Heart left ventricle (tissue), 16 donors: ENCODE measurements at regions of chr6 and their contacts with region 1.

Region 1: DNA sequence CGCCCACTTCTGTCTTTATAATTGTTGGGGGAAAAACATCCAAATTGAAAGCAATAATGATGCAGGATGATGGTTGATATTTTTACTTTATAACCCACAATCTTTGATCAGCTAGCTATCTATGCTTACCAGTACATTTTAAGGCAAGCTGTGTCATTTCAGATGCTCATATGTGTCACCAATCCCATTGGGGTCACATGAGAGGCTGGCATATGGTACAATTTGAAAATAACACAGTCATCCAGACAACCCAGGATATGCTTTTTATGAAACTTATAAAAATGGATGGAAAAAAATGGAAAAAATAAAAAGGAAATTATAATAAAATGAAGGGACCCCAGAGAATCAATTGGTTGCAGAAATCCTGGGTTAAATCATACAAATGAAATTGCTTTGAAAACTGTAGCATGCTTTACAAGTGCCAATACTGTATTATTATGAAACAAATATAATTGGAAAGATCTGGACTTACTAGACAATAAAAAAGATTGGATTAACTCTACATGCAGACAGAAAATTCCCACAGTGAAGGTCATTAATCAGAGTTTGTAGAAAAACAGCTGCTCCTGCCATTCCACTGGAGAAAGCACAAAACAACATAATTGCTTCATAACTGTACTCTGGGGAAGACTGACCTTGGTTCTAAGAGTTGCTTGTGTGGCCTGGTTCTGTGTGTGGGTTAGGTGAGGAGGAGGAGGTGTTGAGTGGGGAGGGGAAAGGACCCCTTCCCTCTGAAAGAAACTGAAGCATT is 13.3 kb upstream of the PRIM2 start:
- DNase-seq: no peak
- ATAC-seq: peak; percentile 28 to 83 (median 70)
- H3K4me3 ChIP-seq: no peak overlapping the region
- H3K27ac ChIP-seq: peak overlapping the region in 7 of 12 donors; percentile 30 to 83 (median 53)
- H3K4me1 ChIP-seq: peaks cover 0 to 18% (median 0%) of the 10 kb centered on the region in 12 donors
- H3K27me3 ChIP-seq: no peaks in the 10 kb centered on the region
- CTCF ChIP-seq: no peak
- POLR2A ChIP-seq: no peak

Region 2: GRCh38 chr6:57013521-57013926 is 290.6 kb before region 1 on chr6:
- intact Hi-C with region 1: no loop called
- DNase-seq: no peak
- ATAC-seq: no peak
- H3K4me3 ChIP-seq: no peak overlapping the region
- H3K27ac ChIP-seq: no peak overlapping the region
- H3K4me1 ChIP-seq: no peaks in the 10 kb centered on the region
- H3K27me3 ChIP-seq: no peaks in the 10 kb centered on the region
- CTCF ChIP-seq: no peak
- POLR2A ChIP-seq: no peak

Region 3: GRCh38 chr6:57172136-57173055 is 131.7 kb before region 1 on chr6 and contains the start of gene BAG2:
- intact Hi-C with region 1: no loop called
- DNase-seq: peak; percentile 86 to 93 (median 91)
- ATAC-seq: peak; percentile 71 to 97 (median 95)
- H3K4me3 ChIP-seq: peak within 1 kb of the TSS; percentile 55 to 86 (median 78)
- H3K27ac ChIP-seq: peak within 1 kb of the TSS; percentile 31 to 97 (median 92)
- H3K4me1 ChIP-seq: peaks cover 0 to 32% (median 12%) of the 10 kb centered on the region in 12 donors
- H3K27me3 ChIP-seq: no peaks in the 10 kb centered on the region
- CTCF ChIP-seq: peak in 9 of 12 donors; percentile 9 to 50 (median 23)
- POLR2A ChIP-seq: peak in 1 of 2 donors; percentile 84
- total RNA-seq, gene BAG2: 8.2 to 18.0 (median 11.6) TPM

Region 4: DNA sequence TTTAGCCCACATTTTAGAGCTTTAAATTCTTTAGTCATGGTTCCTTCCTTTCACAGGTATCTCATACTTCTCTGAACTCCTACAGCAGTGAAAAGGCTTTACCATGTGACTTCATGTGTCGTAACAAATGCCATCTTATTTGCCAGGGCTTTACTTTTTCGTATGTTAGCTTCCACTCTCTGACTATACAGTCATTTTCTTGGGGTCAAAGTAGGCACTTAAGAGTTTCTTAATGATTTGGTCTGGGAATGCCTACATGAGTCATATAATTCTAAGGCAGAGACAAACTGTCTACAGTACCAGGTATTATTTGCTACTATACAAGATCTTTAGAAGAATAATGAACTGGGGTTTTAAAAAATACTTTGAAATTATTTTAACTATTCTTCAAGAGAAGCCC is 97.0 kb before region 1 on chr6:
- intact Hi-C with region 1: no loop called
- DNase-seq: no peak
- ATAC-seq: no peak
- H3K4me3 ChIP-seq: no peak overlapping the region
- H3K27ac ChIP-seq: peak overlapping the region in 1 of 12 donors; percentile 57
- H3K4me1 ChIP-seq: no peaks in the 10 kb centered on the region
- H3K27me3 ChIP-seq: no peaks in the 10 kb centered on the region
- CTCF ChIP-seq: no peak
- POLR2A ChIP-seq: no peak

Region 5: DNA sequence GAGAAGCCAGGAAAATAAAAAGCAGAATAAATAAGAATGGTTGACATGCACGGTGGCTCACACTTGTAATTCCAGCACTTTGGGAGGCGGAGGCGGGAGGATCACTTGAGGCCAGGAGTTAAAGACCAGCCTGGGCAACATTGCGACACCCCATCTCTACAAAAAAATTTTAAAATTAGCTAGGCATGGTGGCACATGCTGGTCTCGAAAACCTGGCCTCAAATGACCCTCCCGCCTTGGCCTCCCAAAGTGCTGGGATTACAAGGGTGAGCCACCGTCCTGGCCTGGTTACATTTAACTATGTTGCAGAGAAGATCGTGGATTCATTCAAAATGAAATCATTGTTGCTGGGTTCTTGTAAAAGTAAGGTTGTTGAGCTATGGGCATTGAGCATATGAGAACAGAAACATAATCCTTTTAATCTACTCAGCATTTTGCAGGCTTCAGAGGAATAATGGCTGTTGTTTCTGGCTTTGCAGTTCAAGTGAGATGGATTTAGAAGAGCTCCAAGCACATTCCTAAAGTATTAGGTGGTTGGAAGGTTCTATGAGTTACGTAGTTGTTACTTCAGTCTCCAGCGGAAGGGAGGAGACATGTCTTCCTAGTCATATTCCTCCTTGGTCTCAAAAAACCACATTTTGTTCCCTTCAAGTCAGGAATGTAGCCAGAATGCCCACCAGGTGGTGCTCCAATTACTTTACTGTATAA is 36.4 kb before region 1 on chr6:
- intact Hi-C with region 1: loop called in 3 of 10 experiments (anchors 5 kb)
- DNase-seq: peak in 3 of 5 donors; percentile 32 to 39 (median 33)
- ATAC-seq: peak; percentile 64 to 96 (median 86)
- H3K4me3 ChIP-seq: no peak overlapping the region
- H3K27ac ChIP-seq: peak overlapping the region in 2 of 12 donors; percentile 11 to 30
- H3K4me1 ChIP-seq: peaks cover 0 to 22% (median 0%) of the 10 kb centered on the region in 12 donors
- H3K27me3 ChIP-seq: no peaks in the 10 kb centered on the region
- CTCF ChIP-seq: peak in 8 of 12 donors; percentile 40 to 59 (median 48)
- POLR2A ChIP-seq: no peak

Region 6: GRCh38 chr6:57288115-57288514 is 16.0 kb before region 1 on chr6:
- intact Hi-C with region 1: loop called in 1 of 10 experiments (anchors 1 kb)
- DNase-seq: no peak
- ATAC-seq: no peak
- H3K4me3 ChIP-seq: no peak overlapping the region
- H3K27ac ChIP-seq: no peak overlapping the region
- H3K4me1 ChIP-seq: no peaks in the 10 kb centered on the region
- H3K27me3 ChIP-seq: no peaks in the 10 kb centered on the region
- CTCF ChIP-seq: no peak
- POLR2A ChIP-seq: no peak